AG04449 (cell line): ENCODE measurements at regions of chr10 and their contacts with region 1.

Region 1: DNA sequence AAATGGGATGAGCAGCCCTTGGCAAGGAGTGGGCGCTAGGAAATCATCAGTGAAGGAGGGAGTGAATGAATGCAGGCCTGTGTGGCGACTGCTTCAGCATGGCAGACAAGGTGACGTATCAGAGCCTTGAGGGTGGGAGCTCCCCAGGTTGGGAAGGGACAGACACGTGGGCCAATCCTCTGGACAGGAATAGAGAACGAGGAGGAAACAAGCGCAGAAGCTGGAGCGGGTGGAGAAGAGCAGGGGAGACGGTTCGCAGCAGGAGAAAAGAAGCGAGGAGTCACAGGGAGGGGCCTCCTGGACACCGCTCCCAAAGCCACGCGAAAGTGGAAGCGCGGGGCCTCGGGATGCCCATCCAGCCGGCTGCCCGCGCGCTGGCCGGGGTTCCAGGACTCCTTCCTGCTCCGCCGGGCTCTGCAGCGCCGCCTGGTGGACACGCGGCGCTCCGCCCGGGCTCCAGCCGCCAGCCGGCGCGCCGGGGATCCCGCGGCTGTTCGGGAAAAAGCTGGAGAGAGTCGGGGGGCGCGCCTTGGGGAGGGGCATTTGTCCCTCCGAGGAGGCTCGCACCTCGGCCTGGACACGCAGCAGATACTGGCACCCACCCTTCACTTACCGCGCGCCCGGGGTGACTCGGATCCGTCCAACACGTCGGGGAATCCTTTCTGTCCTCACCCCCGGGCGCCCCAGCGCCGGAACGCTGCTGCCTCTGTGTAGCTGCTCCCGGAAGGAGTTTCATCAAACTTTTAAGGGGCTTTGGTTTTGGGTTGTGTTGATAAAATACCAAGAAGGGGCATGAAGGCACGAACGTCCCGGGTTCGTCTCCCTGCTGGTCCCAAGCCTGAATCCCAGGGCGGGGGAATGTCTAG is 6.3 kb downstream of the ZNF503 start:
- DNase-seq: no peak
- H3K4me3 ChIP-seq: peak overlapping the region; percentile 25
- CTCF ChIP-seq: peak; percentile 68

Region 2: GRCh38 chr10:74991440-74992130 is 403.7 kb before region 1 on chr10:
- CTCF ChIA-PET with region 1: no interaction called
- POLR2A ChIA-PET with region 1: no interaction called
- DNase-seq: no peak
- H3K4me3 ChIP-seq: no peak overlapping the region
- CTCF ChIP-seq: no peak

Region 3: GRCh38 chr10:75358835-75359431 is 36.4 kb before region 1 on chr10:
- CTCF ChIA-PET with region 1: interaction called, 29 read pairs
- POLR2A ChIA-PET with region 1: interaction called, 3 read pairs
- DNase-seq: peak; percentile 68
- H3K4me3 ChIP-seq: no peak overlapping the region
- CTCF ChIP-seq: no peak

Region 4: GRCh38 chr10:75375838-75376237 is 19.5 kb before region 1 on chr10:
- CTCF ChIA-PET with region 1: interaction called, 57 read pairs
- POLR2A ChIA-PET with region 1: no interaction called
- DNase-seq: no peak
- H3K4me3 ChIP-seq: no peak overlapping the region
- CTCF ChIP-seq: no peak

Region 5: GRCh38 chr10:76303682-76304316 is 908.5 kb after region 1 on chr10:
- CTCF ChIA-PET with region 1: interaction called, 12 read pairs
- POLR2A ChIA-PET with region 1: interaction called, 3 read pairs
- DNase-seq: no peak
- H3K4me3 ChIP-seq: no peak overlapping the region
- CTCF ChIP-seq: peak; percentile 61